ENCODE measurements at regions of chr14 and their contacts with region 1.

Region 1: GRCh38 chr14:57486767-57487379 is 6.8 kb downstream of the CCDC198 start:
- DNase-seq: no peak

Region 2: DNA sequence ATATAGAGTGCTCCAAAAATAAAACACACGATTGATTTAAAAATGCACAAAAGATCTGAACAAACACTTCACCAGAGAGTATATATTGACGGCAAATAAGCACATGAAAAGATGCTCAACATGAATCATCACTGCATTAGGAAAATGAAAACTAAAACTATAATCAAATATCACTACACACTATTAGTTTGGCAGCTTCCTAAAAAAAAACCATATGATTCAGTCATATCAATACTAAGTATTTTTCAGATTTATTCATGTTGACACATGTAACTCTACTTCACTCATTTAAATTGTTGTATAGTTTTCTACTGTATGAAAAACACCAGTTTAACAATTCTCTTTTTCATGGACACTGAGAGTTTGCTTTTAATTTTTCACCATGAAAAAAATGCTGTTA is 259.8 kb before region 1 on chr14:
- intact Hi-C with region 1: no loop called
- DNase-seq: no peak

Region 3: DNA sequence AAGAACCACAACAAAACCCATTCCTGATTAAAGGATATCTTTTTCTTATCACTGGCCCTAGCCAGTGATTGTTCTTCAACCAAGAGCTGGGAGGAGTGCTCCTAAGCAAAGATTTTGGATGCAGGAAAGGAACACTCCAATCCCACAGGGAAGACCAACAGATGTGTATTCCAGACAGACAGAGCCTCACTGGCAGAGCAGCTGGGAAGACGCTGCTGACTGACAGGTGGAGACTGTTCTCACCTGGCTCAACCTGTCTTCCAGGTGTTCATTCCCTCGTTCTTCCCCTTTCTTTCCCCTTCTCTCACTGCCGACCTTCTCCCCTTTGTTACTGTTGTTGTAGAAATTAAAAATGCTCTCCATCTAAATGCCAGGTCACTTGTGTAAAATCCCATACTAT is 96.5 kb after region 1 on chr14:
- intact Hi-C with region 1: no loop called
- DNase-seq: no peak

Region 4: GRCh38 chr14:57617510-57617909 is 130.6 kb after region 1 on chr14:
- intact Hi-C with region 1: no loop called
- DNase-seq: no peak

Region 5: DNA sequence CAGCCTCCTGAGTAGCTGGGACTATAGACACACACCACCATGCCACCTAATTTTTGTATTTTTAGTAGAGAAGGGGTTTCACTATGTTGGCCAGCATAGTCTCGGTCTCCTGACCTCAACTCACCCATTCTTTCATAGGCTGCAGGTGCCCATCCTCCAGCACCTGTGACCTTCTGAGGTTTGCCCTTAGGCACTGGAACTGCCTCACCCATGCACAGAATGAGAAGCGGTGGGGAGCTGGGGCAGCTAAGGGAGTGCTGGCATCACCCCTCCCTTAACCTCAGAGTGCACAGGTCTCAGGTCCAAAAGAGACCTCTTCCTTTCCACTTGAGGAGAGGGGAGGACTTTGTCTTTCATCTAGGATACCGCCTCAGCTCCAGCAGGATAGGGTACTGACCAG is 184.1 kb after region 1 on chr14:
- intact Hi-C with region 1: no loop called
- DNase-seq: no peak

Region 6: GRCh38 chr14:58072288-58073071 is 585.6 kb after region 1 on chr14:
- intact Hi-C with region 1: loop called (anchors 2 kb)
- DNase-seq: no peak

Measured in cardiac septum (tissue), 1 donor.